ENCODE measurements at regions of chr2 and their contacts with region 1.

Region 1: DNA sequence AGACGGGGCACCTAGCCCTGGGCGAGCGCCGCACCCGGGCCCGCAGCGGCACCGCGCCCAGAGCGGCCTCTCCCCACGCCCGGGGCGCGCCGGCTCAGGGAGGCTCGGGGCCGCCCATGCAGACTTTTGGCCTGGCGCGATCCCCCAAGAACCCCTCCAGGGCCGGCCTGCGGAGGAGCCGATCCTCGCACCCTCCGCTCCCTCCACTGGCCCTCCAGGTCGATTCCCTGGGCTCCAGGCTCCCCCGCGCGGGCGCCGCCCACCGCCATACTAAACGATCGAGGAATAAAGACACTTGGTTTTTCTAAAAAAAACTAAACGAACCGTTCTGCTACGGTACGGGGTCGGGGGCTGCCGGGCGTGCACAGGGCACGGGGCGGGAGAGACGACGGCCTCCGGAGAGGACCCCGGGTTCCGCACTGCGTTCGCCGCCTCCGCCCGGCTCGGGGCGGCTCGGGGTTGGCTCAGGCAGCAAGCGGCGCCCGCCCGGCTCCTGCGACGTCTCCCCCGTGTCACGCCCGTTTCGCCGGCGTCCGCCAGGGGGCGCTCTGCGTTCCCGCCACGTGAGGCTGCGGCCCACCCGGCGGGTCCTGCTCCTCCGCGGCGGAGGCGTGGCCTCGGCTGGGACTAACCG is 365 bp upstream of the KHK start:
- DNase-seq: peak; percentile 94 to 100 (median 99)
- ATAC-seq: peak; percentile 96
- H3K4me3 ChIP-seq: peak overlapping the region; percentile 68
- H3K4me3 Mint-ChIP-seq: peak overlapping the region; percentile 75 to 91 (median 86)
- H3K27ac ChIP-seq: peak overlapping the region; percentile 90
- H3K27ac Mint-ChIP-seq: peak overlapping the region; percentile 30 to 91 (median 78)
- H3K4me1 ChIP-seq: peaks cover 18 to 22% of the 10 kb centered on the region in 2 donors
- H3K4me1 Mint-ChIP-seq: peaks cover 13 to 47% (median 29%) of the 10 kb centered on the region in 7 donors
- H3K27me3 ChIP-seq: no peaks in the 10 kb centered on the region
- H3K27me3 Mint-ChIP-seq: no peaks in the 10 kb centered on the region

Region 2: DNA sequence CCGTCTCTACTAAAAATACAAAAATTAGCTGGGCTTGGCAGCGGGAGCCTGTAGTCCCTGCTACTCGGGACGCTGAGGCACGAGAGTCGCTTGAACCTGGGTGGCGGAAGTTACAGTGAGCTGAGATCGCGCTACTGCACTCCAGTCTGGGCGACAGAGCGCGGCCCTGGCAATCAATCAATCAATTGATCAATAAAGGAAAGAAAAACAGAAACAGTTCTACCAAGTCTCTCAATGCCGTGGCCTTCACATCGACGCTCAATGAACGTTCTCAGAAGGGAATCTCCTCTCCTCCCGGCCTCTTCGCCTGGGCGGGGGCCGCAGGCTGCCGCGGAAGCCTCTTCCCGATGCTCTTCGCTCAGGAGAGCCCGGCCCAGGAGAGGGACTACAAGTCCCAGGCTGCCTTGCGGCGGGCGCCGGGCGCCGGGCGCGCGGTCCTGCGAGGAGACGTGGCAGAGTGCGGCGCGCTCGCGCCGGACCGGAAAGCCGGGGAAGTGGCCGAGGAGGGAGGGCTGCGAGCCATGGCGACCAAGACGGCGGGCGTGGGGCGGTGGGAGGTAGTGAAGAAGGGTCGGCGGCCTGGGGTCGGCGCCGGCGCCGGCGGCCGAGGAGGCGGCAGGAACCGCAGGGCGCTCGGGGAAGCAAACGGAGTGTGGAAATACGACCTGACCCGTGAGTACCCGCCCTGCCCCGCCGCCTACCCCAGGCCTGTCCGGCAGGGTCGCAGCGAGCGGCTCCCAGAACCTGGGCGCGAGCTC is 53.5 kb before region 1 on chr2 and contains the start of gene TMEM214:
- CTCF ChIA-PET with region 1: no interaction called
- POLR2A ChIA-PET with region 1: interaction called, 7 read pairs
- intact Hi-C with region 1: loop called (anchors 1 kb)
- DNase-seq: peak; percentile 54 to 88 (median 63)
- ATAC-seq: peak; percentile 97
- H3K4me3 ChIP-seq: peak within 1 kb of the TSS; percentile 99
- H3K4me3 Mint-ChIP-seq: peak within 1 kb of the TSS; percentile 91 to 97 (median 93)
- H3K27ac ChIP-seq: peak within 1 kb of the TSS; percentile 87
- H3K27ac Mint-ChIP-seq: peak within 1 kb of the TSS; percentile 84 to 95 (median 91)
- H3K4me1 ChIP-seq: peaks cover 11 to 19% of the 10 kb centered on the region in 2 donors
- H3K4me1 Mint-ChIP-seq: peaks cover 24 to 63% (median 41%) of the 10 kb centered on the region in 7 donors
- H3K27me3 ChIP-seq: no peaks in the 10 kb centered on the region
- H3K27me3 Mint-ChIP-seq: no peaks in the 10 kb centered on the region
- total RNA-seq, gene TMEM214: 36.7 to 114 (median 67.5) TPM

Region 3: GRCh38 chr2:27123302-27124231 is 37.4 kb after region 1 on chr2 and contains the start of gene ABHD1:
- CTCF ChIA-PET with region 1: no interaction called
- POLR2A ChIA-PET with region 1: interaction called, 6 read pairs
- intact Hi-C with region 1: loop called in 1 of 2 experiments (anchors 1 kb)
- DNase-seq: peak; percentile 37 to 79 (median 51)
- ATAC-seq: peak; percentile 84
- H3K4me3 ChIP-seq: peak within 1 kb of the TSS; percentile 59
- H3K4me3 Mint-ChIP-seq: peak within 1 kb of the TSS; percentile 83 to 95 (median 92)
- H3K27ac ChIP-seq: peak within 1 kb of the TSS; percentile 61
- H3K27ac Mint-ChIP-seq: peak within 1 kb of the TSS; percentile 78 to 89 (median 86)
- H3K4me1 ChIP-seq: peaks cover 5 to 11% of the 10 kb centered on the region in 2 donors
- H3K4me1 Mint-ChIP-seq: peaks cover 10 to 30% (median 20%) of the 10 kb centered on the region in 7 donors
- H3K27me3 ChIP-seq: peaks cover 0 to 3% of the 10 kb centered on the region in 2 donors
- H3K27me3 Mint-ChIP-seq: peaks cover 11 to 40% (median 14%) of the 10 kb centered on the region in 5 donors
- total RNA-seq, gene ABHD1: 0.53 to 2.0 (median 1.5) TPM

Region 4: DNA sequence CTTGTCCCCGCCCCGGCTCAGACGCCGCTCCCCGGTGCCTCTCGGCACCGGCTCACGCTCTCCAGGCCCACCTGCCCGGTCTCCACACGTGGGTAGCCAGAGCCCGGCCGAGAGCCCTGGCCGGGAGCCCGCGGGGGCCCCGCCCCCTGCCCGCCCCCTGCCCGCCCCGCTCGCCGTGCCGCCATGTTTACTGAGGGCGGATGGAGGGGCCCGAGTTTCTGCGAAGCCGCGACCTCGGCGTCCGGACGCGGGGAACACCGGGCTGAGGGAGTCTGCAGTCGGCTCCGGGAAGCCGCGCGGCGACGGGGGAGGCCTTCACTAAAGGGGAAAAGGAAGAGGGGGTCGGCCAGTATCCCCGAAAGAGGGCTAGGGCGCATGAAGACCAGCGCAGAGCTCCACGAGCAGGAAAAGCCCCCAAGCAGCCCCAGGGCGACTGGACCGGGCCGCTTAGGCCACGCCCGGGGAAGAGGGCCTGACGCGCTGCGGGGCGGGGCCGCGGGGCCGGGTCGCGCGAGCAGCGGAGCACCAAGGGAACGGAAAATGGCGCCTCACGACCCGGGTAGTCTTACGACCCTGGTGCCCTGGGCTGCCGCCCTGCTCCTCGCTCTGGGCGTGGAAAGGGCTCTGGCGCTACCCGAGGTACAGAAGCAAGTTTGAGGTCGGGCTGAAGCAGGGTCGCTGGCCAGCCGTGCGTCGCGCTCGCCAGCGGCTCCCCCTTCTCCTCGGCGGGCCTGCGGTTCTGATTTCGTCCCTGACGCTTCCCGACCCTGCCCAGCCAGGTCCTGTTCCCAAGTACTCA is 125.8 kb after region 1 on chr2 and contains the starts of genes ATRAID and SLC5A6:
- CTCF ChIA-PET with region 1: no interaction called
- POLR2A ChIA-PET with region 1: interaction called, 16 read pairs
- intact Hi-C with region 1: loop called (anchors 1 kb)
- DNase-seq: peak; percentile 86 to 93 (median 92)
- ATAC-seq: peak; percentile 93
- H3K4me3 ChIP-seq: peak within 1 kb of the TSS; percentile 91
- H3K4me3 Mint-ChIP-seq: peak within 1 kb of the TSS; percentile 89 to 100 (median 99)
- H3K27ac ChIP-seq: peak within 1 kb of the TSS; percentile 100
- H3K27ac Mint-ChIP-seq: peak within 1 kb of the TSS; percentile 99 to 100 (median 100)
- H3K4me1 ChIP-seq: peaks cover 14 to 17% of the 10 kb centered on the region in 2 donors
- H3K4me1 Mint-ChIP-seq: peaks cover 18 to 49% (median 42%) of the 10 kb centered on the region in 7 donors
- H3K27me3 ChIP-seq: no peaks in the 10 kb centered on the region
- H3K27me3 Mint-ChIP-seq: no peaks in the 10 kb centered on the region
- total RNA-seq, gene ATRAID: 71.0 to 113 (median 90.7) TPM
- total RNA-seq, gene SLC5A6: 25.6 to 203 (median 44.3) TPM

Region 5: GRCh38 chr2:27281855-27282559 is 195.8 kb after region 1 on chr2 and contains the start of gene TRIM54:
- CTCF ChIA-PET with region 1: interaction called, 5 read pairs
- POLR2A ChIA-PET with region 1: no interaction called
- intact Hi-C with region 1: loop called in 1 of 2 experiments (anchors 1 kb)
- DNase-seq: no peak
- ATAC-seq: no peak
- H3K4me3 ChIP-seq: no peak within 1 kb of the TSS
- H3K4me3 Mint-ChIP-seq: peak within 1 kb of the TSS in 1 of 10 donors; percentile 35
- H3K27ac ChIP-seq: no peak within 1 kb of the TSS
- H3K27ac Mint-ChIP-seq: no peak within 1 kb of the TSS
- H3K4me1 ChIP-seq: no peaks in the 10 kb centered on the region
- H3K4me1 Mint-ChIP-seq: peaks cover 0 to 5% (median 4%) of the 10 kb centered on the region in 7 donors
- H3K27me3 ChIP-seq: no peaks in the 10 kb centered on the region
- H3K27me3 Mint-ChIP-seq: peaks cover 12 to 44% (median 26%) of the 10 kb centered on the region in 5 donors
- total RNA-seq, gene TRIM54: not detected

Region 6: DNA sequence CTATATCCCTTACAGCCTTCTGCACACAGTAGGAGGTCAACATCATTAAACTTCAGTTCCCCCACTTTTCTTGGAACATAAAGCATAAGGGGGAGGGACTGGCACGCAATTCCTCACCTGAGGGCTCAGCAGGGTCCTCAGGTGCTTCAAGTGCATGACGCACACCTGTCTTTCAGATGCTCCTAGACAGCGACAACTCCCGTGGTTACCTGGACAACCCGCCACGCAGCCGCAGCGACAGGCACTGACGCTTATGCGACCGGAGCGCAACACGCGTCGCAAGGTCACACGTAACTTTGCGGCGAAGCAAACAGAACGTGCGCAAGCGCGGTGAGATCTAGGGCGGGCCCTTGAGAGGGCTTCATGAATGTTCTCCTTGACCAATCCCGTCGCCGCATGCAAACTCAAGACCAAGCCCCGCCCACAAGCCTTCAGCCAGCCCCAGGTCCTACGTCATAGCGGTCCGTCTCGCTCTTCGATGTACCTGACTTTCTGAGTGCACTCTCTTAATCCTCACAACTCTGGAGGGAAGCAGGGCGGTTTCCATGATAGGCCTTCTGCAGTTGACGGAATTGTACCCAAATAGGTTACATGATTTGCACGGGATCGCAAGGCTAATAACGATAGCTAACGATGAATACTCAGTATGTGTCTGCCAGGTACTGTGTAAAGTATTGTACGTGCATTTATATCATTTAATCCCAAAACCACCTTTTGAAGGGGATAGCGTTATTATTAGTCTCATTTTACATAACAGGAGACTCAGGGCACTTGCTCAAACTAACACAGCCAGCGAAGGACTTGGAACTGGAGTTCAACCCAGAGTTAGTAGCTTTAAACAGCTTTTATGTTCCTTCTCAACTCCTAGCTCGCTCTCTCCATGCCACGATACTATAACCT is 403.5 kb after region 1 on chr2 and contains the start of gene IFT172:
- CTCF ChIA-PET with region 1: no interaction called
- POLR2A ChIA-PET with region 1: no interaction called
- intact Hi-C with region 1: loop called in 1 of 2 experiments (anchors 10 kb)
- DNase-seq: peak; percentile 90 to 100 (median 99)
- ATAC-seq: peak; percentile 96
- H3K4me3 ChIP-seq: peak within 1 kb of the TSS; percentile 63
- H3K4me3 Mint-ChIP-seq: peak within 1 kb of the TSS; percentile 78 to 92 (median 84)
- H3K27ac ChIP-seq: peak within 1 kb of the TSS; percentile 80
- H3K27ac Mint-ChIP-seq: peak within 1 kb of the TSS; percentile 82 to 99 (median 98)
- H3K4me1 ChIP-seq: peaks cover 11 to 16% of the 10 kb centered on the region in 2 donors
- H3K4me1 Mint-ChIP-seq: peaks cover 8 to 29% (median 19%) of the 10 kb centered on the region in 7 donors
- H3K27me3 ChIP-seq: peaks cover 0 to 7% of the 10 kb centered on the region in 2 donors
- H3K27me3 Mint-ChIP-seq: peaks cover 13 to 20% (median 17%) of the 10 kb centered on the region in 5 donors
- total RNA-seq, gene IFT172: 12.3 to 35.8 (median 22.2) TPM

Region 7: GRCh38 chr2:27501042-27501441 is 414.8 kb after region 1 on chr2:
- CTCF ChIA-PET with region 1: no interaction called
- POLR2A ChIA-PET with region 1: no interaction called
- intact Hi-C with region 1: no loop called
- DNase-seq: no peak
- ATAC-seq: no peak
- H3K4me3 ChIP-seq: no peak overlapping the region
- H3K4me3 Mint-ChIP-seq: no peak overlapping the region
- H3K27ac ChIP-seq: no peak overlapping the region
- H3K27ac Mint-ChIP-seq: no peak overlapping the region
- H3K4me1 ChIP-seq: no peaks in the 10 kb centered on the region
- H3K4me1 Mint-ChIP-seq: peaks cover 0 to under 1% (median 0%) of the 10 kb centered on the region in 7 donors
- H3K27me3 ChIP-seq: peaks cover 0 to 3% of the 10 kb centered on the region in 2 donors
- H3K27me3 Mint-ChIP-seq: peaks cover 24 to 42% (median 29%) of the 10 kb centered on the region in 5 donors

Region 8: GRCh38 chr2:28338046-28338817 is 1252.0 kb after region 1 on chr2:
- CTCF ChIA-PET with region 1: no interaction called
- POLR2A ChIA-PET with region 1: no interaction called
- intact Hi-C with region 1: no loop called
- DNase-seq: no peak
- ATAC-seq: no peak
- H3K4me3 ChIP-seq: no peak overlapping the region
- H3K4me3 Mint-ChIP-seq: no peak overlapping the region
- H3K27ac ChIP-seq: no peak overlapping the region
- H3K27ac Mint-ChIP-seq: peak overlapping the region in 4 of 9 donors; percentile 9 to 64 (median 51)
- H3K4me1 ChIP-seq: no peaks in the 10 kb centered on the region
- H3K4me1 Mint-ChIP-seq: peaks cover 0 to 10% (median 0%) of the 10 kb centered on the region in 7 donors
- H3K27me3 ChIP-seq: no peaks in the 10 kb centered on the region
- H3K27me3 Mint-ChIP-seq: no peaks in the 10 kb centered on the region